ENCODE measurements at regions of chr9 and their contacts with region 1.

Region 1: GRCh38 chr9:81759668-81760215 is 70.4 kb upstream of the TLE1 start:
- DNase-seq: peak; percentile 68
- H3K4me3 ChIP-seq: no peak overlapping the region
- H3K27ac ChIP-seq: no peak overlapping the region
- H3K4me1 ChIP-seq: no peaks in the 10 kb centered on the region
- H3K27me3 ChIP-seq: no peaks in the 10 kb centered on the region
- CTCF ChIP-seq: no peak

Region 2: GRCh38 chr9:81716409-81716808 is 43.3 kb before region 1 on chr9:
- CTCF ChIA-PET with region 1: no interaction called
- dilution Hi-C with region 1: loop called (anchors 5 kb)
- in situ Hi-C with region 1: no loop called
- intact Hi-C with region 1: no loop called
- DNase-seq: peak; percentile 61
- H3K4me3 ChIP-seq: no peak overlapping the region
- H3K27ac ChIP-seq: no peak overlapping the region
- H3K4me1 ChIP-seq: no peaks in the 10 kb centered on the region
- H3K27me3 ChIP-seq: no peaks in the 10 kb centered on the region
- CTCF ChIP-seq: no peak

Region 3: GRCh38 chr9:82031322-82032280 is 271.9 kb after region 1 on chr9:
- CTCF ChIA-PET with region 1: no interaction called
- dilution Hi-C with region 1: no loop called
- in situ Hi-C with region 1: no loop called
- intact Hi-C with region 1: no loop called
- DNase-seq: peak; percentile 79
- H3K4me3 ChIP-seq: no peak overlapping the region
- H3K27ac ChIP-seq: no peak overlapping the region
- H3K4me1 ChIP-seq: peaks cover 9% of the 10 kb centered on the region
- H3K27me3 ChIP-seq: no peaks in the 10 kb centered on the region
- CTCF ChIP-seq: no peak

Measured in mammary epithelial cell (primary cell).